Gastrocnemius medialis (tissue), 4 donors: ENCODE measurements at regions of chr1 and their contacts with region 1.

Region 1: GRCh38 chr1:35192853-35193664 is at the start of gene SFPQ:
- DNase-seq: peak; percentile 97 to 99
- ATAC-seq: peak; percentile 96 to 98
- H3K4me3 ChIP-seq: peak within 1 kb of the TSS; percentile 75 to 99 (median 93)
- H3K27ac ChIP-seq: peak within 1 kb of the TSS; percentile 97 to 100 (median 100)
- H3K4me1 ChIP-seq: peaks cover 28 to 41% of the 10 kb centered on the region in 2 donors
- H3K27me3 ChIP-seq: no peaks in the 10 kb centered on the region
- CTCF ChIP-seq: no peak
- POLR2A ChIP-seq: peak; percentile 94 to 98
- total RNA-seq, gene SFPQ: 70.1 to 128 (median 82.4) TPM

Region 2: DNA sequence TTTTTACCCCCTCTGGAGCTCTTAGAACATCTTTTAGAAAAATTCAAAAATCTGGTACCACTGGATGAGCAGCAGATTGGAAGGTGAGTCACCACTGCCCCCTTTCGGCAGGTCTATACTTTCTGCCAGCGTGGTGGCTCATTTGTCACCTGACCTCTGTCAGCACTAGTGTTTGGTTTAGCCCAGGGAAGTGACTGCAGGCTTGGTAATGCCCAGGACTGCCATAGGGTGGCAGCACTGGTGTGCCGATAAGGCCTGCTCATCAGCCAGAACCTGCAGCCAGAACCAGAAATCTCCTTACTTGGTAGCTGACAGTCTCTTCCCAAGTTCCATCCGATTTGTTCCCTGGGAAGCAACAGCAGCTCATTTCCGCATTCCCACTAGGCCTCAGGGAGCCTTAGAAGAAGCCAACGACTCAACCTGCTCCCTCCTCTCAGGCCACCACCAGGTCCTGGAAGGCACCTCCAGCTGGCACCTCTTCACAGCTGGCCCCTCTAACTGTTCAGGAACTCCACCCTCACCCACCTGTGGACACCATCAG is 340.3 kb before region 1 on chr1:
- in situ Hi-C with region 1: loop called in 1 of 4 experiments (anchors 25 kb)
- intact Hi-C with region 1: no loop called
- DNase-seq: peak; percentile 40 to 83
- ATAC-seq: peak; percentile 87 to 97
- H3K4me3 ChIP-seq: no peak overlapping the region
- H3K27ac ChIP-seq: peak overlapping the region; percentile 50 to 74 (median 60)
- H3K4me1 ChIP-seq: peaks cover 10 to 22% of the 10 kb centered on the region in 2 donors
- H3K27me3 ChIP-seq: no peaks in the 10 kb centered on the region
- CTCF ChIP-seq: peak; percentile 81 to 90 (median 86)
- POLR2A ChIP-seq: no peak

Region 3: DNA sequence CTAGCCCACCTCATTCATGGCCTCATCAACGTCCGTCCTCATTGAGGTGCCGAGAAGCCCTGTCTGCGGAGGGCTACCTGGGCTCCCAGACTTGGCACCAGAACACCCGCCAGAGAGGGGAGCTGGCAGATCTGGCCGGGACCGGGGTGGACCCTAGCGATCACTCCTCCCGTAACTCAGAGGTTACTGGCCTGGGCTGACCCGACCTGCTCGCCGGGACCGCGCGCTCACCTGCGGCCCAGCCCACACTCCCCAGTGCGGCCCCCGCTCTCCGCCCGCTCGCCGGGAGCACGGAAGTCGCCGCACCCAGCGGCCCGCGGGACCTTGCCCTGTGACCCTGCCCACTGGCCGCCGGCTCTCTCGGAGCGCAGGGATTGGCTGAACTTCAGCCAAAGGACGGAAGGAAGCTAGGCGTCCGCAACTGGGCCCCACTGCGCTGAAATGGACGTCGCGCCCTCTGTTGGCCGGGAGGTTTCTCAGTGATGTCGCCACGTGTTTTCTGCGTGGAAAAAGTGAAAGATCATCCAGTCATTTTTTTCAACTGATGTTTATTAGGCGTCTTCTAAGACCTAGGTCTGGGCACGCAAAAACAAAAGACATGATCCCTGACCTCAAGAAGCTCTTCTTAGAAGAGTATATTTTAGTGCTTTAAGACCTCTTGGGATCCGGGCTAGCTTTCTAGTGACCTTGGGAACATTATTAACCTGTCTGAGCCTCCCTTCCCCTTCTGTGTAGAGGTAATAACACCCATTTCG is 333.4 kb before region 1 on chr1 and contains the start of gene SMIM12:
- in situ Hi-C with region 1: loop called in 1 of 4 experiments (anchors 25 kb)
- intact Hi-C with region 1: loop called (anchors 10 kb)
- DNase-seq: peak; percentile 93 to 95
- ATAC-seq: peak; percentile 98
- H3K4me3 ChIP-seq: peak within 1 kb of the TSS; percentile 75 to 98 (median 97)
- H3K27ac ChIP-seq: peak within 1 kb of the TSS; percentile 89 to 97 (median 92)
- H3K4me1 ChIP-seq: peaks cover 22 to 29% of the 10 kb centered on the region in 2 donors
- H3K27me3 ChIP-seq: no peaks in the 10 kb centered on the region
- CTCF ChIP-seq: peak; percentile 86 to 90 (median 86)
- POLR2A ChIP-seq: peak; percentile 89 to 93
- total RNA-seq, gene SMIM12: 24.2 to 40.8 (median 35.6) TPM

Region 4: DNA sequence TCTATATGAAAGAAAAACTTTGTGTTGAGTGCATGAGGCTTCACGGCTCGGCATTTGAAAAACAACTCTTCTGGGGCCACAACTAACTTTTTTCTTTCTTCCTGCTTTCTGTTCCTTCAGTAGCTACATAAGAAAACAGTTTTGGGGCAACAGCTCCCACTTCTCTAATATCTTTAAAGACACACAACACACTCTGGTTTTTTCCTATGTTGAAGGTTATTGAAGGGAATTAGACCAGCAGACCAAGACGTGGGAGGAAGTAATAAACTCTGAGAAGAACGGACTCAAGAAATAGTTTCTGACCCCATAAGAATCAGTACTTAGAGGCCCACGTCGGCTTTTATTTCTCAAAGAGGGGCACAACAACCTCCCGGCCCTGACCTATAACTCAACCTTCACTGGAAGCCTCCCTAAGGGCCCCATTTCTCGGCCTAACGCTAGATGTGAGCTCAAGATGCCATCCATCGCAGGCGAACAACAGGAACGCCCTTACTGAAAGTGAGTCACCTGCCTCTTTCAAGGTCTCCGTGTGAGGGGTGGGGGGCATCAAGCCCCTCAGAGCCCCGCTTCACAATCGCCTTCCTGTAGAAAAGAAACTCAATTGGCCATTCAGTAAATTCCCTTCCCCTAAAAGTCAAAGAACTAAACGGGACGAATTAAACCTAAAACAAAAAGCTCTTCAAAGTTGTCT is 162.2 kb before region 1 on chr1:
- in situ Hi-C with region 1: no loop called
- intact Hi-C with region 1: loop called (anchors 2 kb)
- DNase-seq: no peak
- ATAC-seq: peak; percentile 23
- H3K4me3 ChIP-seq: peak overlapping the region; percentile 60 to 98 (median 86)
- H3K27ac ChIP-seq: peak overlapping the region; percentile 85 to 93 (median 90)
- H3K4me1 ChIP-seq: peaks cover 13 to 23% of the 10 kb centered on the region in 2 donors
- H3K27me3 ChIP-seq: no peaks in the 10 kb centered on the region
- CTCF ChIP-seq: no peak
- POLR2A ChIP-seq: no peak

Region 5: GRCh38 chr1:35136780-35137179 is 56.3 kb before region 1 on chr1:
- in situ Hi-C with region 1: no loop called
- intact Hi-C with region 1: no loop called
- DNase-seq: no peak
- ATAC-seq: no peak
- H3K4me3 ChIP-seq: no peak overlapping the region
- H3K27ac ChIP-seq: no peak overlapping the region
- H3K4me1 ChIP-seq: no peaks in the 10 kb centered on the region
- H3K27me3 ChIP-seq: no peaks in the 10 kb centered on the region
- CTCF ChIP-seq: no peak
- POLR2A ChIP-seq: no peak

Region 6: GRCh38 chr1:35268282-35269200 is 75.5 kb after region 1 on chr1 and contains the start of gene ZMYM4:
- in situ Hi-C with region 1: no loop called
- intact Hi-C with region 1: loop called (anchors 5 kb)
- DNase-seq: peak; percentile 78 to 93
- ATAC-seq: peak; percentile 91 to 95
- H3K4me3 ChIP-seq: peak within 1 kb of the TSS; percentile 75 to 94 (median 88)
- H3K27ac ChIP-seq: peak within 1 kb of the TSS; percentile 79 to 92 (median 88)
- H3K4me1 ChIP-seq: peaks cover 3 to 12% of the 10 kb centered on the region in 2 donors
- H3K27me3 ChIP-seq: no peaks in the 10 kb centered on the region
- CTCF ChIP-seq: no peak
- POLR2A ChIP-seq: no peak
- total RNA-seq, gene ZMYM4: 11.1 to 25.3 (median 13.7) TPM

Region 7: DNA sequence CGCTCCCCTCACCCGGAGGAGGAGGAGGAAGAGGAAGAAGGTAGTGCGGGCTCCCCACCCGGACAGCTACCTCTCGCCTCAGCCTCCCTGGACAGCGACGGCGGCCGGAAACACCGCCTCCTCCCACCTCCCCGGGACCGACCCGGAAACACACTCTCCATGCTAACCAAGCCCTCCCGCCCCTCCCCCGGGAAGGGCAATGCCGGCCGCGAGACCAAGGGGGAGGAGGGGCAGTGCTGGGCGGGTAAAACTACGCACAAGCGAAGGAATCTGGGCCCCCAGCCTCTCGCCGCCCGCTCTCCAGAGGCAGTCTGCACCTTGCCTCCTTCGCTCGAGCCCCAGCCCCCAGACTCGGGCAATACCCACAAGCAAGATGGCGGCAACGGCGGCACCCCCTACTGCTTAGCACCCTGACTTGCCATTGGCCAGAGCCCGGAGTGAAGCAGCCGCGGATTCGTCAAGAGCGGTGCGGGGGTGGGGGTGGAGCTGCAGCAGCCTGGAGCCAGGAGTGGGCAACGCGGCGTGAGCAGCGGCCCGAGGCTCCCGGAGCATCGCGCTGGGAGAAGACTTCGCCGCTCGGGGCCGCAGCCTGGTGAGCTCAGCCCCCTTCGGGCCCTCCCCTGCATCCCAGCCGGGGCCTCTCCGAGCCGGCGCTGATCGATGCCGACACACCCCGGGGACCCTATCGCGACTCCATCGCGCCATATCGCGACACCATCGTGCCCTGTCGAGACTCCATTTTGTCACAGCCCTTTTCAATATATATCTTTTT is 364.4 kb after region 1 on chr1 and contains the starts of genes KIAA0319L and NCDN:
- in situ Hi-C with region 1: loop called in 1 of 4 experiments (anchors 10 kb)
- intact Hi-C with region 1: loop called (anchors 2 kb)
- DNase-seq: peak; percentile 97
- ATAC-seq: peak; percentile 94 to 97
- H3K4me3 ChIP-seq: peak within 1 kb of the TSS; percentile 84 to 99 (median 98)
- H3K27ac ChIP-seq: peak within 1 kb of the TSS; percentile 91 to 100 (median 99)
- H3K4me1 ChIP-seq: peaks cover 45 to 69% of the 10 kb centered on the region in 2 donors
- H3K27me3 ChIP-seq: no peaks in the 10 kb centered on the region
- CTCF ChIP-seq: peak in 1 of 5 experiments; percentile 12
- POLR2A ChIP-seq: peak; percentile 68 to 81
- total RNA-seq, gene KIAA0319L: 44.4 to 85.0 (median 69.2) TPM
- total RNA-seq, gene NCDN: 8.7 to 16.8 (median 14.0) TPM

Region 8: GRCh38 chr1:35588197-35588910 is 395.3 kb after region 1 on chr1:
- in situ Hi-C with region 1: no loop called
- intact Hi-C with region 1: no loop called
- DNase-seq: no peak
- ATAC-seq: no peak
- H3K4me3 ChIP-seq: no peak overlapping the region
- H3K27ac ChIP-seq: no peak overlapping the region
- H3K4me1 ChIP-seq: no peaks in the 10 kb centered on the region
- H3K27me3 ChIP-seq: no peaks in the 10 kb centered on the region
- CTCF ChIP-seq: no peak
- POLR2A ChIP-seq: no peak

Region 9: DNA sequence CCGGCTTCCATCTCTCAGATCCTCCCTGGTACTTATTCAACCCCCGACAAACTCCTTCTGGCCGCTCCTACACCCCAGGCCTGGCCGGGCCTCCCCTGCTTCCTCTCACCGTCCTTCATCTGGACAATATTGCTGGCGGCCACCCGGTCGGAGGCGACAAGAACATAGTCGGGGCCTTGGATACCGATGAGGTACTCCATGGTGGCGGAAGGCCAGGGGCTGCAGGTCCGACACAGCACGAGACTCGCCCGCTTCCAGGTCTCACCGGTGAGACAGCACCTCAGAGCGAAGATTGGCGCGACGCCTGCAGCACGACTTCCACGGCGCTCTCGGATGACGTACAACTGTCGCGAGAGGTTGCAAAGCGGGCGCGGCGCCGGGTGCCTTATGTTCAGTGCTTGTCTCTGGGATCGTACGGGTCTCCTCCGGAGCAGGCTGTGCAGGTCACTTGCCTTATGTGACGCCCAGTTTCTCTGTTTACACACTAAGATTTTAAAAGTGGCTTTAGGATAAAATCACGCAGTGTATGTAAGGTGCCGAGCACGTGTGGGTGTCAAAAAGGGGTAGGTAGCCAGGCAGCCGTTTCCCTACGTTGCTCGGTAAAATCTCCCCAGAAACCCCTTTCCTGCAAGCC is 448.3 kb after region 1 on chr1 and contains the start of gene PSMB2:
- in situ Hi-C with region 1: no loop called
- intact Hi-C with region 1: loop called (anchors 10 kb)
- DNase-seq: peak; percentile 93 to 97
- ATAC-seq: peak; percentile 97
- H3K4me3 ChIP-seq: peak within 1 kb of the TSS; percentile 82 to 98 (median 88)
- H3K27ac ChIP-seq: peak within 1 kb of the TSS; percentile 93 to 98 (median 95)
- H3K4me1 ChIP-seq: peaks cover 40 to 43% of the 10 kb centered on the region in 2 donors
- H3K27me3 ChIP-seq: no peaks in the 10 kb centered on the region
- CTCF ChIP-seq: peak in 1 of 5 experiments; percentile 11
- POLR2A ChIP-seq: peak; percentile 74 to 90
- total RNA-seq, gene PSMB2: 65.2 to 119 (median 89.9) TPM